PC-9 (cell line): ENCODE measurements at regions of chr10 and their contacts with region 1.

Region 1: GRCh38 chr10:86079088-86079487 is 287.5 kb downstream of the GRID1 start:
- DNase-seq: no peak
- H3K4me3 ChIP-seq: no peak overlapping the region
- H3K27ac ChIP-seq: no peak overlapping the region
- H3K4me1 ChIP-seq: no peaks in the 10 kb centered on the region
- H3K27me3 ChIP-seq: peaks cover 15% of the 10 kb centered on the region; the same call in 1 of the 2 replicates
- CTCF ChIP-seq: no peak

Region 2: GRCh38 chr10:85098835-85099521 is 980.1 kb before region 1 on chr10:
- CTCF ChIA-PET with region 1: interaction called, 10 read pairs
- POLR2A ChIA-PET with region 1: no interaction called
- intact Hi-C with region 1: no loop called
- DNase-seq: no peak
- H3K4me3 ChIP-seq: no peak overlapping the region
- H3K27ac ChIP-seq: no peak overlapping the region
- H3K4me1 ChIP-seq: no peaks in the 10 kb centered on the region
- H3K27me3 ChIP-seq: no peaks in the 10 kb centered on the region
- CTCF ChIP-seq: no peak

Region 3: DNA sequence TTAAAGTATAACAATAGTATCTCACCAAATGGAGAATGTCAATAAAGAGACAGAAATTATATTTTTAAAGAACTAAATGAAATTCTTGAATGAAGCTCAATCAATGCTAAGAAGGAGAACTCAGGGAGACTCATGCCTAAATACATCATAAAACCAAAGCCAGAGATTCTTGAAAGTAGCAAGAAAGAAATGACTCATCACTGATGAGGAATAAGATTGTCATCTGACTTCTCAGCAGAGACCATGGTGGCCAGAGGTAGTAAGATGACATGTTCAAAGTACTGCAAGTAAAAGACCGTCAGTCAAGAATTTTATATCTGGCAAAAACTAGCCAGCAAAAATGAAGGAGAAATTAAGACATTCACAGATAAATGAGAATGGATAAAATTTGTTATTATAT is 111.5 kb before region 1 on chr10:
- CTCF ChIA-PET with region 1: no interaction called
- POLR2A ChIA-PET with region 1: no interaction called
- intact Hi-C with region 1: no loop called
- DNase-seq: no peak
- H3K4me3 ChIP-seq: no peak overlapping the region
- H3K27ac ChIP-seq: no peak overlapping the region
- H3K4me1 ChIP-seq: no peaks in the 10 kb centered on the region
- H3K27me3 ChIP-seq: no peaks in the 10 kb centered on the region
- CTCF ChIP-seq: no peak

Region 4: DNA sequence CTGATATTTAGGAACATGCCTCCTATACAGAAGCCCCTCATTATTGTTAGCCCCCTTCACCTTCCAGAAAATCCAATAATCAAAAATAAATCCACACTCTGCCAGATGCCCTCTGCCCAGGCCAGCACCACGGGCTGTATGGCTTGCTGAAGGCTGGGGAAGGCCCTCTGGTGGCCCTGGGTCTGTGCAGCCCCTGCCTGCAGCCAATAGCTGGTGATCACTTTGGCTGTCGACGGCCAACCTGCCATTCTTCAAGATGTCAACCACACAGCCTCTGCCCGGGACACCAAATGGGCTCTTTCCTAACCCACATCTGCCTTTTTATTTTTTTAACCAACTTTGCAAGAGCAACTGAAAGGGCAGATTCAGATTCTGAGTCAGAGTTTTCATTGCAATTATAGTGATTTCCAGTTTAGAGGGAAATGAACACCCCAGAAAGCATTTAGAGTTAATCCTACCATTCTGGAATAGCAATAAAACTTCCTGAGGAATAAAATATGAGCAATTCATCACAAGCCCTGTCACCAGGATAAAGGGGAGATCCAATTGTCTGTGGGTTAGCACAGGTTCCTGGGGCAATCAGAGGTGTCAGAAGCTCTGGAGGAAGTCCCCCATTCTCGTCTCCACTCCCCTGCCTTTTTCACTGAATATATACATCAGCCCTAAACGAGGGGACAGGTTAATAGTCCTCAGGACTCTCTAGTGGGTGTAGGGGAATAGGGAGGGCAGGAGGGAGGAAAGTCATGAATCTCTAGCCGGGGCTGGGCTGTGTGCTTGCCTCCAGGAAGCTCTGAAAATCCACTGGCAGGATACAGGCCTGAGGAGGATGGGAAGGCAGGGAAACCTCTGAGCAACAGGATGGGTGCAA is 76.2 kb after region 1 on chr10:
- CTCF ChIA-PET with region 1: no interaction called
- POLR2A ChIA-PET with region 1: no interaction called
- intact Hi-C with region 1: no loop called
- DNase-seq: no peak
- H3K4me3 ChIP-seq: no peak overlapping the region
- H3K27ac ChIP-seq: no peak overlapping the region
- H3K4me1 ChIP-seq: no peaks in the 10 kb centered on the region
- H3K27me3 ChIP-seq: no peaks in the 10 kb centered on the region; the same call in 1 of the 2 replicates
- CTCF ChIP-seq: no peak